ENCODE measurements at regions of chr12 and their contacts with region 1.

Region 1: DNA sequence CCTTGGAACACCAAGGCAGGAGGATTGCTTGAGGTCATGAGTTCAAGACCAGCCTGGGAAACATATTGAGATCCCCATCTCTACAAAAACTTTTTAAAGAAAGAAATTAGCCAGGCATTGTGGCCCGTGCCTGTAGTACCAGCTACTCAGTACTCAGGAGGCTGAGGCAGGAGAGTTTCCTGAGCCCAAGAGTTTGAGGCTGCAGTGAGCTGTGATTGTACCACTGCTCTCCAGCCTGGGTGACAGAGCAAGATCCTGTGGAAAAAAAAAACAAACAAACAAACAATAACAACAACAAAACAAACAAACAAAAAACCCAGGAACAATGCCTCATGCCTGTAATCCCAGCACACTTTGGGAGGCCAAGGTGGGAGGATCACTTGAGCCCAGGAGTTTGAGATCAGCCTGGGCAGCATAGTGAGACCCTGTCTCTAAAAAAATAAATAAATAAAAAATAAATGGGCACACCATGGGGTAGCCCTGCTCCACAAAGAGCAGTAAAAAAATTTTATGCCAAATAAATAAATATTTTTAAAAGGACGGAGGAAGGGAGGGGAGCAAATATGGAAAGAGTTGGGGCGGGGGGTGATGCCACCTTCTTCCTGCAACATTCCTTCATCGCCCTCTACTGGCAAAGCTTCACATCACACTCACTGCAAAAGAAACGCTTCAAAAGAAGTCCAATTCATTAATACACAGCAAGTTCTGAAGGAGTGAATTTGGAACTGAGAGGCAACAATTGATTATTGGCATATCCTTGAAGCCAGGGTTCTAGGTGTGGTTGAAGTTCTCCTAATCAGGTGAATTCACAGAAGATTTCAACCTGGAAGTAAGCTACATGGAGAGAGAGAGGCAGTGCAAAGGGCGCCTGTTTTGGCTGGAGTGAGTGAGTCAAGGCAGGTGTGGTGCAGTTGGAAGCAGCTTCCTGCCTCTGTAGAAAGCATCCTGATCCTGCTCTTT is 8.8 kb upstream of the GNPTAB start:
- DNase-seq: peak; percentile 81
- ATAC-seq: peak; percentile 76
- H3K4me3 Mint-ChIP-seq: no peak overlapping the region
- H3K27ac Mint-ChIP-seq: no peak overlapping the region
- H3K4me1 Mint-ChIP-seq: peaks cover 7% of the 10 kb centered on the region
- H3K27me3 Mint-ChIP-seq: no peaks in the 10 kb centered on the region

Region 2: DNA sequence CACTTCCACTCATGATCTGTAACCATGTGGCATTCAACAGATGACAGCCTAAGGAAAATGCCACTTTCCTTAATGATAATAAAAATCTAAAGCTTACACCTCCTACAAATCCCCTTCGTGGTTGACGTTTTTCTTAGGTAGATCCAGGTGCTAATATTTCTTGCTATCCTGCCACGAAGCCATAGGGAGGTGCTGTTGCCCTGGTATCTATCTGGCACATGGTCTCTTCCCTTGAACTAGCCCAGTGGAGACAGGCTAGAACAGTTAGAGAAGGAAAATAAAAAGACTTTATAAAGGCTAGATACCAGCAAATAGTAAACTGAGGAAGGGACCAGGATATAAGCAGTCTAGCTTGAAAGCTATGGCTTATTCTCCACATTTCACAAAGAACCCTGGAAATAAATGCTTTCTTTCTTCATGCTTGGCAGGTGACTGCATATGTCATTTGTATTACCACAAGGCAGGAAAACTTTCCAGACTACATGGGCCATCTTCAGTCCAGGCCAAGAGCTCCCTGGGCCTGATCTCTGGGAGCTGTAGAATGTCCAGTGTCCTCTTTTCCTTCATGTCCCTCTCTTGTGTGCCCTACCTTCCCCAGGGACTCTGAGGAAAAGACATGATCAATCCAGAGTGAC is 349.2 kb before region 1 on chr12:
- CTCF ChIA-PET with region 1: interaction called, 3 read pairs
- POLR2A ChIA-PET with region 1: no interaction called
- intact Hi-C with region 1: loop called in 1 of 2 experiments (anchors 5 kb)
- DNase-seq: peak; percentile 48
- ATAC-seq: peak; percentile 64
- H3K4me3 Mint-ChIP-seq: no peak overlapping the region
- H3K27ac Mint-ChIP-seq: no peak overlapping the region
- H3K4me1 Mint-ChIP-seq: no peaks in the 10 kb centered on the region
- H3K27me3 Mint-ChIP-seq: peaks cover 11% of the 10 kb centered on the region

Region 3: DNA sequence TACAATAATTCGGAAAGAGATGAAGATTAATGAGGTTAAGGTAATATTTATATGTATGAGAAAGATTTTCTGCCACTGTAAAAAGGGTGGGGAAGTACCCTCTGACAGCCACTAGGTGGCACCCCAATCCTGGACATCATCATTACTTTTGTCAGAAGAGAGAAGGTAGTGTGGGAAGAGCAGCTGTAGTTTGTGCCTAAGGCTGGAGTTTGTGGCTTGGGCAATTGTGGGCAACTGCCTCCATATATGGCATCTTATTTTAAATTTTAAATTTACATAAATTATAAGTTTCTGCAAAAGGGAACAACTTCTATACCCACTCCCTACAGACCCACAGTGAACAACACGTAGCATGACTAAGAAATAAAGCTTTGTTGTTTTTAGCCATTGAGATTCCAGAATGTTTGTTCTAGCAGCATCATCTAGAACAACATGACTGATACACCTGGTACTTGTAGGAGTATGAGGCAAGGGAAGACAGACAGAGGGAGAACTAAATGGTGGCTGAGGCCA is 65.9 kb before region 1 on chr12:
- CTCF ChIA-PET with region 1: interaction called, 280 read pairs
- POLR2A ChIA-PET with region 1: no interaction called
- intact Hi-C with region 1: loop called (anchors 1 kb)
- DNase-seq: peak; percentile 78
- ATAC-seq: peak; percentile 87
- H3K4me3 Mint-ChIP-seq: no peak overlapping the region
- H3K27ac Mint-ChIP-seq: peak overlapping the region; percentile 65
- H3K4me1 Mint-ChIP-seq: peaks cover 9% of the 10 kb centered on the region
- H3K27me3 Mint-ChIP-seq: no peaks in the 10 kb centered on the region

Region 4: GRCh38 chr12:101792051-101792931 is 47.3 kb before region 1 on chr12:
- CTCF ChIA-PET with region 1: interaction called, 20 read pairs
- POLR2A ChIA-PET with region 1: no interaction called
- intact Hi-C with region 1: no loop called
- DNase-seq: no peak
- ATAC-seq: no peak
- H3K4me3 Mint-ChIP-seq: no peak overlapping the region
- H3K27ac Mint-ChIP-seq: no peak overlapping the region
- H3K4me1 Mint-ChIP-seq: peaks cover 25% of the 10 kb centered on the region
- H3K27me3 Mint-ChIP-seq: no peaks in the 10 kb centered on the region

Region 5: DNA sequence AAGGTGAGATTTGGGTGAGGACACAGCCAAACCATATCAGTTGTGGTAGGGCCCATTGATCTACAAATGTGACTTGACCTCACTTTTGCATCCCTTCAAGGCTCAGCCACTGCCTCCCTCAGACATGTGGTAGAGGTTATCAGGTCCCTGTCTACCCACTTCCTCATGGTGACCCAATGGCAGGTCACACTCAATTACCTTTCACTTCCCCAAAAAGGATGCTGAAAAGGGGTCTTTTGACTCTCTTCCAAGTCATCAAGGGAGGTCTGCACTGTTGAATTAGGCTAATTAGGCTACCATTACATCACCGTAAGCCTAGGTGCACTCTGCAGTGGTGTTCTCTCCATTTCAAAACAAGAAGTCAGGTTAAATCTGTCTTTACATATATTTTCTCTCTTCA is 15.1 kb after region 1 on chr12:
- CTCF ChIA-PET with region 1: interaction called, 14 read pairs
- POLR2A ChIA-PET with region 1: no interaction called
- intact Hi-C with region 1: no loop called
- DNase-seq: no peak
- ATAC-seq: no peak
- H3K4me3 Mint-ChIP-seq: no peak overlapping the region
- H3K27ac Mint-ChIP-seq: no peak overlapping the region
- H3K4me1 Mint-ChIP-seq: peaks cover 22% of the 10 kb centered on the region
- H3K27me3 Mint-ChIP-seq: no peaks in the 10 kb centered on the region

Measured in activated CD4-positive, alpha-beta T cell treated with anti-CD3 and anti-CD28 coated beads for 36 hours (primary cell).